Gastrocnemius medialis (tissue), 4 donors: ENCODE measurements at regions of chr5 and their contacts with region 1.

Region 1: DNA sequence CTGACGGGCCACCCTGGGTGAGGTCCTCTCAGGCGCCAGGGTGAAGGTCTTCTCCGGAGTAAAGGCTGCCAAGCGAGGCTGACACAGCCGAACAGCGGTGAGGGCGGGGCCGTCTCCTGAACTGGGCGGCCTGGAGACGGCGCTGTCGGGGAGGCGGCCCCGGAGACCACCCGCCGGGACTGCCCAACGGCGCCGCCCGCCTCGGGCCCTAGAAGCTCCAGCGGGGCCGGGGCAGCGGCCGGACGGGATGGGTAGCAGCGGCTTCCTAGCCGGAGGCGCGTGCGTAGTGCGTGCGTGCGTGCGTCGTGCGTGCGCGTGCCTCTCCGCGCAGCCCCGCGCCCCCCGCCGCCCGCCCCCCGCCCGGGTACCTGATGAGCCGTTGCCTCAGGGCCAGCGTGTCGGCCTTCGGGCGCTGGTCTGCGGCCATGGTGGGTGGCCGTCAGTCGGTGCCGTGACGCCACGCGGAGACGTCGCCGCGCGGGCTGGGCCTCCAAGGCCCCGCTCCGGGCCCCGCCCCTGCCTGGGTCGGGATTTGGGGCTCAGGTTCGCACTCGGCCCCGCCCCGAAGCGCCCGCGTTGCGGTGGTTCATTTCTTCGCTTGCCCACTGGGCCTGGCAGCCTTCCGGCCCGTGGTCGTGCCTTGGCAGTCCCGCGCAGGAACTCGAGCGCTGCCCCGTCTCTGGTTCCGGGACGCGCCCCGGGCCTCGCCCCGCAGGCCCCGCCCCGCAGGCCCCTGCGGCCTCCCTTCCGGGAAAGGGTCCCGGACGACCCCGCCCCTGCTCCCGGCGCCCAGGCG is at the start of gene PHYKPL:
- DNase-seq: peak; percentile 39 to 76
- ATAC-seq: peak; percentile 42 to 55
- H3K4me3 ChIP-seq: peak within 1 kb of the TSS; percentile 60 to 76 (median 70)
- H3K27ac ChIP-seq: peak within 1 kb of the TSS; percentile 87 to 99 (median 94)
- H3K4me1 ChIP-seq: peaks cover 53 to 58% of the 10 kb centered on the region in 2 donors
- H3K27me3 ChIP-seq: no peaks in the 10 kb centered on the region
- CTCF ChIP-seq: peak in 1 of 5 experiments; percentile 6
- POLR2A ChIP-seq: peak; percentile 79 to 80
- total RNA-seq, gene PHYKPL: 25.0 to 54.6 (median 33.7) TPM

Region 2: GRCh38 chr5:178204182-178204894 is 28.0 kb before region 1 on chr5 and contains the start of gene HNRNPAB:
- in situ Hi-C with region 1: no loop called
- intact Hi-C with region 1: loop called (anchors 1 kb)
- DNase-seq: peak; percentile 94 to 97
- ATAC-seq: peak; percentile 89 to 92
- H3K4me3 ChIP-seq: peak within 1 kb of the TSS; percentile 62 to 79 (median 70)
- H3K27ac ChIP-seq: peak within 1 kb of the TSS; percentile 82 to 92 (median 88)
- H3K4me1 ChIP-seq: peaks cover 26 to 32% of the 10 kb centered on the region in 2 donors
- H3K27me3 ChIP-seq: no peaks in the 10 kb centered on the region
- CTCF ChIP-seq: no peak
- POLR2A ChIP-seq: peak; percentile 100
- total RNA-seq, gene HNRNPAB: 84.2 to 117 (median 106) TPM

Region 3: DNA sequence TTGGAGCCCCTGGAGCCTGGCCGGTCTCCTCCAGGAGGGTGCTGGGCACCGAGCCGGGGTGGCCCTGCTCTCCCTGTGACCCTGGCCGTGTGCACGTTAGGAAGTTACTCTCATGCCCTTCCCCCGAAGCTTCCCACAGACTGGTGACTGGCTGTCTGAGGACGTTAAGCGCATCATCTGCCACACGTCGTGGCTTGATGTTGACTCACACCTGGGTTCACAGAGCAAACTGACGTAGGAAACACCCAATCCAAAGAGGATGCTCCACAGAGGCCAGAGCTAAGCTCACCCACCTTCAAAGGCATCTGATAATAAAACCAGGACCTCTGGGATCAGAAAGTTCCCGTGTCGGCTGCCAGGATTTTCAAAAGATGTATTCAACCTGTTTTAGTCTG is 153.2 kb after region 1 on chr5:
- in situ Hi-C with region 1: no loop called
- intact Hi-C with region 1: no loop called
- DNase-seq: no peak
- ATAC-seq: no peak
- H3K4me3 ChIP-seq: no peak overlapping the region
- H3K27ac ChIP-seq: no peak overlapping the region
- H3K4me1 ChIP-seq: peaks cover 0 to 6% of the 10 kb centered on the region in 2 donors
- H3K27me3 ChIP-seq: no peaks in the 10 kb centered on the region
- CTCF ChIP-seq: no peak
- POLR2A ChIP-seq: no peak

Region 4: DNA sequence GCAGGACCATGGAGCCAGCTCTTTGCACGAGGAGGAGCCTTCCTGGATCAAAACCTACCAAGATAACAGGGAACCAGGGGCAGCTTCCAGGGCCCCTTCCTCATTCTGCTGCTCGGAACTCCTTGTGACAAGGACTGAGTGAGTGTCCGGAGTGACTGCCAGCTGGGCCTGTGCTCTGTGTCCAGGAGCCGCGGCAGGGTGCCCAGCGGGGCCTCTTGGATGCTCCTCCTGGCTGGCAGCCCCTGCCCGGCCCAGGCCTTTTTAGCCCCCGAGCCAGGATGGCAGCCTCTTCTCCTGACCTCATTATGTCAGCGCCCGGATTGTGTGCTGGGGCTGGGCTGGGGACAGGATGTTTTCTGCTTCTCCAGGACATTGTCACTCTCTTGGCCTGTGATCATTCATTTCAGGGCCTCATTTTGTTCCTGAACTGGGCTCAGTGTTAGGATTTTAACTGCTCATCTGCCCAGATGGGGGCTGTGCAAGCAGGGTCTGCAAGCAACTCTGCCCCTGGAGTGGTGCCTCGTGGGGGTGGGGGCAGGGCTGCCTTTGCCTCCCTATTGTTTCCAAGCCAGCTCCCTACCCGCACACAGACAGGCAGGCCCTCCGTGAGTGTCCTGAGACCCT is 196.1 kb after region 1 on chr5:
- in situ Hi-C with region 1: no loop called
- intact Hi-C with region 1: loop called (anchors 5 kb)
- DNase-seq: peak; percentile 90 to 94
- ATAC-seq: peak; percentile 87 to 90
- H3K4me3 ChIP-seq: no peak overlapping the region
- H3K27ac ChIP-seq: peak overlapping the region; percentile 87 to 98 (median 92)
- H3K4me1 ChIP-seq: peaks cover 19 to 28% of the 10 kb centered on the region in 2 donors
- H3K27me3 ChIP-seq: no peaks in the 10 kb centered on the region
- CTCF ChIP-seq: no peak
- POLR2A ChIP-seq: peak; percentile 23 to 39

Region 5: DNA sequence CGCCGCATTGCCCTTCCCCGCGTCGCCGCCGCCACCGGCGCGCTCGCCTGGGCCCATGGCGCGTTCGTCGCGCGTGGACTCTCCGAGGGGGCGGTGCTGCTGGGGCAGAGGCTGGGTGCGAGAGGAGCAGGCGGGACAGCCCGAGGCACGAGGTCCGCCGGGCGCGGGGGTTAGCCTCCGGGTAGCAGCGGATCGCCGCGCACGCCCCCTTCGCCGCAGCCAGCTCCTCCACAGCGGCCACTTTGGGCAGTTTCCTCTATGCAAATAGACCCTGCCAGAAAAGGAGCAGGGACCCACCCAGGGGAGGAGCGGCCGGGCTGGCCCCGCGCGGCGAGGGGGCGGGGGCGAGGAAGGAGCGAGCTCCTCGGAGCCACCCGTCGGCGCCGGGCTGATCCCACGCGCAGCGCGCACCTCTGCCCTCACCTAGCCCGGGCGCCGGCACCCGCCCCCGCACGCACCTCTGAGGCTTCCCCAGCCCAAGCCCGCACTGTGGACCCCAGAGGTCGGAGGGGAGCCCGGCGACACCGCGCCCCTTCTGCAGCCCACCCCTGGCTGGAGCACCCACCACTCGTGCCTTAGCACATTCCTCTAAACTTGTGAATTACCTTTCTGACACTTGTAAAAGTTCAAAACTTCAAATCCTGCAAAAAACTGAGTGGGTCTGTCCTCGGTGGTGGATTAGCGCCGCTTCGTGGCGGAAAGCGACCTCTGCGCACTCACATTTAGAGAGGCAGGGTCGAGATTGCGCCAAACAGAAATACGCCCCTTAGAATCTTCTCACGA is 358.0 kb after region 1 on chr5 and contains the start of gene COL23A1:
- in situ Hi-C with region 1: no loop called
- intact Hi-C with region 1: loop called (anchors 2 kb)
- DNase-seq: peak; percentile 43 to 53
- ATAC-seq: peak; percentile 65
- H3K4me3 ChIP-seq: peak within 1 kb of the TSS; percentile 53 to 65 (median 58)
- H3K27ac ChIP-seq: peak within 1 kb of the TSS; percentile 70 to 86 (median 78)
- H3K4me1 ChIP-seq: peaks cover 9 to 23% of the 10 kb centered on the region in 2 donors
- H3K27me3 ChIP-seq: peaks cover 0 to 2% (median 0%) of the 10 kb centered on the region in 3 donors
- CTCF ChIP-seq: peak; percentile 42 to 73 (median 64)
- POLR2A ChIP-seq: peak; percentile 16 to 18
- total RNA-seq, gene COL23A1: 0.62 to 1.1 (median 0.97) TPM in 3 of 4 donors, not detected in the other